Activated T-helper 2 cell treated with anti-CD3 and anti-CD28 coated beads, Interferon-gamma antibody, Interleukin-2, Interleukin-4, amounts not matched to agents 10 μg/mL and 5 μg/mL and 100 μg/mL, durations not matched to agents 14 hours and 24 hours and 36 hours (primary cell): ENCODE measurements at regions of chr1 and their contacts with region 1.

Region 1: DNA sequence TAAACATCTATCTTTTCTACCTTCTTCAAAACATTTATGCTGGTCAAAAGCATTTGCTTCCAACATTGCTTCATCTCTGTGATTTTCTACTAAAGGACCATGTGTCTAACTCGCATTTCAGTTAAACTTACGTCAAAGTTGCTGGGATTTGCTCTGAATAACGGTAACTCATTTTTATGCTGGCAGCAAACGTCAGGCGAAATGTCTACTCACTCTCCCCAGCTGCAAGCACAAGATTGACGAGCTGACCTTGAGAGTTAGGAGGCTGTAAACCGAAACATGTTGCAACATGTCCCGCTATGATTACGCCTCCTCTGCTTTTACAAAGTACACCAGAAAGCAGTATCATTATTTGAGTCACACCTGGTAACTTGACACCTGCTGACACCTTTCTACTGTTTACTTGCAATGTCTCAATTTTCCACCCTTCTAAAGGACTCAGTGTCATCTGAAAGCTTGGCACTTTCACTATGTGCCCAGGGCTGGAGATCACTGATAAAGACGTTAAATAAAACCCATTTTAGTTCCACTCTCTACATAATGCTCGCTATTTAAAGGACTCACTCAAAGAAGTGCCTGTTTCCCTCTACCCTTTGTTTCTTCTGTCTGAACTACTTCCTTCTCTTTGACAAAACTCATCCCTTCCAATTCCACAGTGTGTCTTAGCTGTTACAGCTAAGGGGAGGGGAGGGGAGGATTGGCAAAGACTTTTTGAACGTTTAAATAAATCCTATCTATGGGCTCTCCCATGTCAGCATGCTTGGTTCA is 111.9 kb downstream of the PTPN14 start:
- DNase-seq: peak; percentile 59
- H3K4me3 Mint-ChIP-seq: peak overlapping the region; percentile 58
- H3K27ac Mint-ChIP-seq: peak overlapping the region; percentile 93
- H3K4me1 Mint-ChIP-seq: peaks cover 68% of the 10 kb centered on the region
- H3K27me3 Mint-ChIP-seq: no peaks in the 10 kb centered on the region

Region 2: GRCh38 chr1:214076708-214077065 is 362.8 kb before region 1 on chr1:
- intact Hi-C with region 1: no loop called
- DNase-seq: no peak
- H3K4me3 Mint-ChIP-seq: no peak overlapping the region
- H3K27ac Mint-ChIP-seq: no peak overlapping the region
- H3K4me1 Mint-ChIP-seq: no peaks in the 10 kb centered on the region
- H3K27me3 Mint-ChIP-seq: no peaks in the 10 kb centered on the region

Region 3: GRCh38 chr1:214281021-214281719 is 158.4 kb before region 1 on chr1 and contains the start of gene SMYD2:
- intact Hi-C with region 1: loop called (anchors 5 kb)
- DNase-seq: peak; percentile 64
- H3K4me3 Mint-ChIP-seq: peak within 1 kb of the TSS; percentile 94
- H3K27ac Mint-ChIP-seq: peak within 1 kb of the TSS; percentile 75
- H3K4me1 Mint-ChIP-seq: peaks cover 32% of the 10 kb centered on the region
- H3K27me3 Mint-ChIP-seq: no peaks in the 10 kb centered on the region
- total RNA-seq, gene SMYD2: 33.6 and 34.5 TPM in 2 replicates

Region 4: DNA sequence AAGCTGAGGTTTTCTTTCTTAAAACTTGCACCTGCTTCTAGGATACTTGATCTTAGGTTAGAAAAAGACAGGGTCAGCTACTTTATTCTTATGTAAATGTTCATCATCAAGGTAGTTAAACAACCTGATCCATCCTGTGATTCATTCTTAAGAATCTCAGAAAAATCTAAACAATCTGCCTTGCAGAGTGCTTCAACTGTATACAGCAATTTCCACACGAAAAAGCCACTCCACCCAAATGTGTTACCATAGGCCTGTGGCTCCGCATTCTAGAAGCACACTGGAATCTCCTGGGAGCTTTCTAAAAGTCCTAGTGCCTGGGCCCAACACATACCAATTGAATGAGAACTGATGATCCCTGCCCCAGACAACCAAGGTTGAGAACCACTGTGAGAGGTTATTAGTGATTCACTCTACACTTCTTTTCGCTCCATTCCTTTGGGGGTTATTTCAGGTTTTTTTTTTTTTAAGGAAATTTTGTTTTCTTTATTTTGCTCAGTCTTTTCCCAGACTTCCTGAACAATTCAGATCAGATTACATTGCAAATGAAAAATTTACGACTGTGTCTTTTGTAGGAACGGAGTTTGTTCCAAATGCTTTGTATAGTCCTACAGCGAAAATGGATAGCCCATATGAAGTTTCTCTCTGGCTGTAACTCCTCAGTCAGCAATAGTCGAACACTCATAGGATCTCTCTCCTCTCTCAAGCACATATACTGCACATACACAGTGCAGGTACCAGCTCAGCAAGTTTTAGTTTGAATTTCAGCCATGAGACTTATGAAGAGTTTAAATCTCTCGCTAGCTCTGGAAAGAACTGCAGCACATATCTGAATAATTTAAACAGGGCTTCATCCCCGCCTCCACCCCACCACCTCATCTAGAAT is 142.4 kb before region 1 on chr1:
- intact Hi-C with region 1: no loop called
- DNase-seq: no peak
- H3K4me3 Mint-ChIP-seq: no peak overlapping the region
- H3K27ac Mint-ChIP-seq: no peak overlapping the region
- H3K4me1 Mint-ChIP-seq: peaks cover 2% of the 10 kb centered on the region
- H3K27me3 Mint-ChIP-seq: no peaks in the 10 kb centered on the region

Region 5: GRCh38 chr1:214386747-214387146 is 52.8 kb before region 1 on chr1:
- intact Hi-C with region 1: loop called (anchors 1 kb)
- DNase-seq: peak; percentile 41
- H3K4me3 Mint-ChIP-seq: peak overlapping the region; percentile 55
- H3K27ac Mint-ChIP-seq: peak overlapping the region; percentile 92
- H3K4me1 Mint-ChIP-seq: peaks cover 58% of the 10 kb centered on the region
- H3K27me3 Mint-ChIP-seq: no peaks in the 10 kb centered on the region

Region 6: GRCh38 chr1:214427871-214428277 is 11.7 kb before region 1 on chr1:
- intact Hi-C with region 1: loop called (anchors 1 kb)
- DNase-seq: peak; percentile 85
- H3K4me3 Mint-ChIP-seq: peak overlapping the region; percentile 62
- H3K27ac Mint-ChIP-seq: peak overlapping the region; percentile 97
- H3K4me1 Mint-ChIP-seq: peaks cover 60% of the 10 kb centered on the region
- H3K27me3 Mint-ChIP-seq: no peaks in the 10 kb centered on the region

Region 7: GRCh38 chr1:214476958-214477870 is 37.7 kb after region 1 on chr1:
- intact Hi-C with region 1: loop called (anchors 2 kb)
- DNase-seq: no peak
- H3K4me3 Mint-ChIP-seq: no peak overlapping the region
- H3K27ac Mint-ChIP-seq: no peak overlapping the region
- H3K4me1 Mint-ChIP-seq: peaks cover 41% of the 10 kb centered on the region
- H3K27me3 Mint-ChIP-seq: no peaks in the 10 kb centered on the region

Region 8: GRCh38 chr1:214584805-214585766 is 145.6 kb after region 1 on chr1:
- intact Hi-C with region 1: loop called (anchors 1 kb)
- DNase-seq: no peak
- H3K4me3 Mint-ChIP-seq: no peak overlapping the region
- H3K27ac Mint-ChIP-seq: peak overlapping the region; percentile 70
- H3K4me1 Mint-ChIP-seq: peaks cover 19% of the 10 kb centered on the region
- H3K27me3 Mint-ChIP-seq: no peaks in the 10 kb centered on the region